Activated CD4-positive, alpha-beta memory T cell treated with anti-CD3 and anti-CD28 coated beads for 36 hours (primary cell): ENCODE measurements at regions of chr12 and their contacts with region 1.

Region 1: GRCh38 chr12:8890313-8891085 is 23.8 kb upstream of the PHC1 start:
- DNase-seq: peak; percentile 65
- H3K4me3 Mint-ChIP-seq: peak overlapping the region; percentile 83
- H3K27ac Mint-ChIP-seq: no peak overlapping the region
- H3K4me1 Mint-ChIP-seq: peaks cover 5% of the 10 kb centered on the region
- H3K27me3 Mint-ChIP-seq: no peaks in the 10 kb centered on the region

Region 2: GRCh38 chr12:8662593-8662992 is 227.9 kb before region 1 on chr12 and contains the start of gene MFAP5:
- CTCF ChIA-PET with region 1: interaction called, 43 read pairs
- POLR2A ChIA-PET with region 1: no interaction called
- intact Hi-C with region 1: loop called (anchors 2 kb)
- DNase-seq: no peak
- H3K4me3 Mint-ChIP-seq: no peak within 1 kb of the TSS
- H3K27ac Mint-ChIP-seq: no peak within 1 kb of the TSS
- H3K4me1 Mint-ChIP-seq: no peaks in the 10 kb centered on the region
- H3K27me3 Mint-ChIP-seq: peaks cover 5% of the 10 kb centered on the region
- total RNA-seq, gene MFAP5: not detected

Region 3: GRCh38 chr12:8675591-8676036 is 214.9 kb before region 1 on chr12:
- CTCF ChIA-PET with region 1: interaction called, 32 read pairs
- POLR2A ChIA-PET with region 1: no interaction called
- intact Hi-C with region 1: no loop called
- DNase-seq: no peak
- H3K4me3 Mint-ChIP-seq: no peak overlapping the region
- H3K27ac Mint-ChIP-seq: no peak overlapping the region
- H3K4me1 Mint-ChIP-seq: peaks cover 3% of the 10 kb centered on the region
- H3K27me3 Mint-ChIP-seq: peaks cover 2% of the 10 kb centered on the region

Region 4: DNA sequence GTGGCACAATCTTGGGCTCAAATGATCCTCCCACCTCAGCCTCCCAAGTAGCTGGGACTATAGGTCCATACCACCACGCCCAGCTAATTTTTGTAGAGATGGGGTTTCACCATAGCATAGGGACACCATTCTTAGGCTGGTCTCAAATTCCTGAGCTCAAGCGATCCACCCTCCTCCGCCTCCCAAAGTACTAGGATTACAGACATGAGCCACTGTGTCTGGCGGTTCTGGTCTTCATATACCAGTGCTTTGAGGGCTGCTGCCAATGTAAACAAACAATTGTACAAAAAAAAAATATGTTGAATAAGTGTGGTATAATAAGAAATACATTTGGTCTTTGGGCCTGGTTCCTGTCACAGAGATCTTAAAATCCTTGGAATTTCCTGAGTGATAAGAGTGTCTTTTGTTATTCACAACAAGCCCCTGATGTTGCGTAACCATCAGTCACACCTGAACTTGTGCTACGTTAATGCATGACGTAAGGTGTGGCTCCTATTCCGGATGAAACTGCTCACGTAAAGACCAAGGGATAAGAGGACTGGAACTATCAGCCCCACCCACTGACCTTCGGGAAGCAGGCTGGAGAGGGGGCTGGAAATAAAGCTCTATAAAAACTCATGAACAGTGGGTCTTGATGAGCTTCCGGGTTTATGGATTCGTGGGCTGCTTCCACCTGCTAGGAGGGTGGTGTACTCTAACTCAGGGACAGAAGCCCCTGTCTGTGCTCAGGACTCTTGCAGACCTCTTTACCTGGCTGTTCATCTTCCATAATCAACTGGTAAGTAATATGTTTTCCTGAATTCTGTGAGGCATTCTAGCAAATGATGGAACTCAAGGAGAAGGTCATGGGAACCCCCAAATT is 209.2 kb before region 1 on chr12:
- CTCF ChIA-PET with region 1: interaction called, 32 read pairs
- POLR2A ChIA-PET with region 1: no interaction called
- intact Hi-C with region 1: loop called (anchors 1 kb)
- DNase-seq: no peak
- H3K4me3 Mint-ChIP-seq: no peak overlapping the region
- H3K27ac Mint-ChIP-seq: no peak overlapping the region
- H3K4me1 Mint-ChIP-seq: peaks cover 2% of the 10 kb centered on the region
- H3K27me3 Mint-ChIP-seq: peaks cover 5% of the 10 kb centered on the region

Region 5: GRCh38 chr12:8687846-8688601 is 202.5 kb before region 1 on chr12:
- CTCF ChIA-PET with region 1: interaction called, 19 read pairs
- POLR2A ChIA-PET with region 1: no interaction called
- intact Hi-C with region 1: no loop called
- DNase-seq: no peak
- H3K4me3 Mint-ChIP-seq: no peak overlapping the region
- H3K27ac Mint-ChIP-seq: no peak overlapping the region
- H3K4me1 Mint-ChIP-seq: no peaks in the 10 kb centered on the region
- H3K27me3 Mint-ChIP-seq: no peaks in the 10 kb centered on the region

Region 6: GRCh38 chr12:8914716-8915526 is 24.4 kb after region 1 on chr12:
- CTCF ChIA-PET with region 1: interaction called, 11 read pairs
- POLR2A ChIA-PET with region 1: no interaction called
- intact Hi-C with region 1: no loop called
- DNase-seq: peak; percentile 74
- H3K4me3 Mint-ChIP-seq: no peak overlapping the region
- H3K27ac Mint-ChIP-seq: no peak overlapping the region
- H3K4me1 Mint-ChIP-seq: peaks cover 7% of the 10 kb centered on the region
- H3K27me3 Mint-ChIP-seq: no peaks in the 10 kb centered on the region

Region 7: DNA sequence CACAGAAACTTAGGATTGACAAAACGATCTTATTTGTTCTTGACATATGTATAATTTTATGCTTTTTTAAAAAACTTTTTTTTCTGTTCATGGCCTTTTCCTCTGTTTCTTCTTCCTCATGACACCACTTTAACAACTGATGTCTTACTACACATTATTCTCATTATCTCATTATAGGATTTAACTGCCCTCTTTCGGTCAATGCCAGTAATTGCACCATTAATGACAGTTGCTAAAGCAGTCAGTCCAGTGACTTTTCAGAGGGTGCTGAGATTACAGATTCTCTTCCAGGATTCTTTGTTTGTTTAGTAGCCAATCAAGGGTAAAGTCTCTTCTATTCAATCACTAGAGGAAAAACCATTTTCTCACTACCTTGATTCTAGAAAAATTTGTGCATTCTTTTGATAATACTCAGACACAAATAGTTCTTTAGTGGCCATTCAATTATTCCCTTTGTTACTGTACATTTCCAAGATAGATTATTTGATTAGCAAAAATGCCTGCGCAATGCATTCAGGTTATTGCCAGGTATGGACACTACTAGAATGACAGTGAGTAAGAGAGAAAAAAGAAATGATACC is 149.0 kb after region 1 on chr12:
- CTCF ChIA-PET with region 1: interaction called, 19 read pairs
- POLR2A ChIA-PET with region 1: no interaction called
- intact Hi-C with region 1: no loop called
- DNase-seq: no peak
- H3K4me3 Mint-ChIP-seq: no peak overlapping the region
- H3K27ac Mint-ChIP-seq: no peak overlapping the region
- H3K4me1 Mint-ChIP-seq: peaks cover 60% of the 10 kb centered on the region
- H3K27me3 Mint-ChIP-seq: no peaks in the 10 kb centered on the region